ENCODE measurements at regions of chr6 and their contacts with region 1.

Region 1: GRCh38 chr6:18122124-18123093 is at the start of gene NHLRC1:
- DNase-seq: peak; percentile 68 to 95
- H3K4me3 ChIP-seq: peak within 1 kb of the TSS; percentile 66 to 77
- H3K27ac ChIP-seq: peak within 1 kb of the TSS; percentile 15 to 63
- H3K4me1 ChIP-seq: peaks cover 0 to 10% of the 10 kb centered on the region in 2 donors
- H3K27me3 ChIP-seq: no peaks in the 10 kb centered on the region
- CTCF ChIP-seq: peak; percentile 90 to 98 (median 96)
- total RNA-seq, gene NHLRC1: 0.32 TPM

Region 2: DNA sequence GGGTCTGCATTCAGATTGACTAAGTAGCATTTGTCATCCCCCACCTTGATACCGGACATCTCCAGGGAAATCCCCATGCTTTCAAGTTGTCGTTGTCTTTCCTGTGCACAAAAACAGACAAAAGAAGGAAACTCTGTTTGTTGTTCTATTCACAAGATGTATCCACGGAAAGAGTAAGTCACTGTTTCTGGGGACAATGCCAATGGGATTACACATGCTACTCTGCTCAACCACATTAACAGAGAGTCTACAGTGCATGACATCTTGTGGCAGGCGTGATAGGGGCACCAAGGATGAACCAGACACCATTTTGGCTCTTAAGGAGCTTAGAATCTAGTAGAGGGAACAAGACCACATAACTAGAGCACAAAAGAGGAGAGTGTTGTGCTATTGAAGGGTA is 291.3 kb before region 1 on chr6:
- intact Hi-C with region 1: loop called (anchors 5 kb)
- DNase-seq: no peak
- H3K4me3 ChIP-seq: no peak overlapping the region
- H3K27ac ChIP-seq: peak overlapping the region in 1 of 2 donors; percentile 35
- H3K4me1 ChIP-seq: no peaks in the 10 kb centered on the region
- H3K27me3 ChIP-seq: no peaks in the 10 kb centered on the region
- CTCF ChIP-seq: no peak

Region 3: DNA sequence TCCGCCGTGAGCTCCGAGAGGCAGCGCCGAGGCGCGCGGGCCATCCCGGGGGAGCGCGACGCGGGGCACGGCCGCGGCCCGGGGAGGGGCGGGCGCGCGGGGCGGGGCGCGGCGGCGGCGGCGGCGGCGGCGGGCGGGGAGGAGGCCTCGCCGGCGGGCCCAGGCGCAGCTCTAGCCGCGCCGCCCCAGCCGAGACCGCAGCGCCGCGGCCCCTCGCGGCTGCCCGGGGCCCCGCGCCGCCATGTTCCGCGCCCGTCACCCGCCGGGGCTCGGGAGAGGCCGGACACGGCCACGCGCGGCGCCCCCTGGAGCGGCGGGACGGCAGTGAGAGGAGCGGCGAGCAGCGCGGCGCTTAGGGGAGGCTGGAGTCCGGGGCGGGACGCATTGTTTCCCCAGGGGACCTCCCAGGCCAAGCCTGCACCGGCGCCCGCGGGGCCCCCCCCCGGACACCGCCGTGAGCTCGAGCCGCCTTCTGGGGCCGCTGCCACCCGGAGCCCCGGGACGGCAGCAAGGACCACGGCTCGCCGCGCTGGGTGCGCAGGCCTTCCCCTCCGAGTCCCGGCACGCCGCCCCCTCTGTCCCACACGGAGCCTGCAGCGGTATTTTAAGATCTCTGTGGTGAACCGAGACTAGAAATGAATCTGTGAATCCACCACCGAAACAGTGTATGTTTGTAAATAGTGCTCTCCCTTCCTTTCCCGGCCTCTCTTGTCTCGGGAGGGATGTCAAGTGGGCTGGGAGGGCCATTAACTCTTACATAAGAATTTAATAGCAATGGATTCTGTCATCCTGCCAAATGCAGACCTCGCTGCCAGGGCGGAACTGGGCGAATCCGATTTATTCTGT is 134.6 kb before region 1 on chr6 and contains the start of gene KIF13A:
- intact Hi-C with region 1: loop called (anchors 1 kb)
- DNase-seq: peak in 1 of 2 donors; percentile 86
- H3K4me3 ChIP-seq: peak within 1 kb of the TSS; percentile 81 to 84
- H3K27ac ChIP-seq: peak within 1 kb of the TSS; percentile 92 to 93
- H3K4me1 ChIP-seq: peaks cover 0 to 18% of the 10 kb centered on the region in 2 donors
- H3K27me3 ChIP-seq: no peaks in the 10 kb centered on the region
- CTCF ChIP-seq: peak in 2 of 3 experiments; percentile 20 to 42
- total RNA-seq, gene KIF13A: 28.9 TPM

Region 4: GRCh38 chr6:18081362-18082006 is 40.9 kb before region 1 on chr6:
- intact Hi-C with region 1: no loop called
- DNase-seq: no peak
- H3K4me3 ChIP-seq: no peak overlapping the region
- H3K27ac ChIP-seq: no peak overlapping the region
- H3K4me1 ChIP-seq: no peaks in the 10 kb centered on the region
- H3K27me3 ChIP-seq: no peaks in the 10 kb centered on the region
- CTCF ChIP-seq: no peak